GM12878 (cell line): ENCODE measurements at regions of chr1 and their contacts with region 1.

Region 1: GRCh38 chr1:199173356-199173755 is 534.5 kb downstream of the PTPRC start:
- DNase-seq: peak; percentile 92
- ATAC-seq: peak; percentile 89
- H3K4me3 ChIP-seq: no peak overlapping the region
- H3K27ac ChIP-seq: peak overlapping the region; percentile 85
- H3K4me1 ChIP-seq: peaks cover 27% of the 10 kb centered on the region
- H3K27me3 ChIP-seq: no peaks in the 10 kb centered on the region
- CTCF ChIP-seq: no peak
- EP300 ChIP-seq: peak; percentile 94 to 95
- POLR2A ChIP-seq: no peak
- RAD21 ChIP-seq: peak; percentile 20; the same call in 1 of the 2 replicates

Region 2: DNA sequence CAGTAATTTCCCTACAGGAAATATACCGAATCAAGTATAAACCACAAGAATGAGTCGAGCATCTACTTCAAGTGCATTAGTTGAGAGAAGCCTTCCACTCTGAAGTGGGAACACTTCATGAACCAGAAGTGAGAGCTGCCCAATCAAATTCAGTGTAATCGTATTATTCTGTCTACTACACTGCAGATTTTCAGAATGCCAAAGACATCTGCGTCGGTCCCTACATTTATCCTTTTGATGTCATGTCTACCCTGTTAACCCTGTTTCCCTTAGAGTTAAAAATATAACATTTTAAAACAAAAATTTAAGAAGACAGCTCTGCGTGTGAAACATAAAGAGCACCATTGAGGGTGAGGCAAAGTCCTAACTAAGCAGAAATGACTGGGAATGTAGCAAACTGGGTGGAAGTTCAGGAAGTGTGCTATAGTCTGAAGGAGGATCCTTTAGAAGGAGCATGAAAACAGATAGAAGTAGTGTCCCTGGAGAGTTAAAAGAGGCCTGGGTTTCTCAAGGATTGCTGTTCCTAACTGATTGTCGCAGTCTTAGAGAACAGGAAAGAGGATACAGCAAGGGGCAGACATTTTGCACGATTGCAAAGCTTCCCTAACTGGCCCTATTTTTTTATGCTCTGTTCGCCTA is 243.3 kb before region 1 on chr1:
- CTCF ChIA-PET with region 1: interaction called, 8 read pairs
- POLR2A ChIA-PET with region 1: interaction called, 3 read pairs
- RAD21 ChIA-PET with region 1: interaction called, 33 read pairs
- SMC1A ChIA-PET with region 1: interaction called, 34 read pairs
- in situ Hi-C with region 1: loop called (anchors 5 kb)
- intact Hi-C with region 1: loop called (anchors 5 kb)
- DNase-seq: peak; percentile 45
- ATAC-seq: peak; percentile 69
- H3K4me3 ChIP-seq: peak overlapping the region; percentile 59
- H3K27ac ChIP-seq: peak overlapping the region; percentile 76
- H3K4me1 ChIP-seq: peaks cover 2% of the 10 kb centered on the region; the same call in 1 of the 2 replicates
- H3K27me3 ChIP-seq: no peaks in the 10 kb centered on the region
- CTCF ChIP-seq: no peak
- EP300 ChIP-seq: no peak
- POLR2A ChIP-seq: no peak
- RAD21 ChIP-seq: no peak

Region 3: DNA sequence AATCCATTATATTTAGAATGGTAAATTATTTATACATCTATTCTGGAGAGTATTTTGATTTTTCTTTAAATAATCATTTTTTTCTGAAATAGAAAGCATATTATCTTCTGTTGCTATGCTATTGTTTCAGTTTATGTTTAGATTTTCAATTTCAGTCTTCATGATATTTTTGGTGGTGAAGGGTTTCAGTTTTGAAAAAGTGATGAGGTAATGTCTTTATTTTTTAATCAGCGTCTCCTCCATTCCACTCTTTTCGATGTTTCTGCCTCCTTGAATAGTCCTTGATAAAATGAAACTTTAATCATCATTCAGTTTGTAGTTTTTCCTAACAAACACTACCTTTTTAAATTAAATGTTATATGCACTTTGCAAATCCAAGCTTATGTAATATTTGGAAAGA is 105.9 kb before region 1 on chr1:
- CTCF ChIA-PET with region 1: interaction called, 3 read pairs
- POLR2A ChIA-PET with region 1: no interaction called
- RAD21 ChIA-PET with region 1: interaction called, 11 read pairs
- SMC1A ChIA-PET with region 1: interaction called, 7 read pairs
- in situ Hi-C with region 1: no loop called
- intact Hi-C with region 1: no loop called
- DNase-seq: no peak
- ATAC-seq: peak; percentile 90
- H3K4me3 ChIP-seq: 0 out of 2 replicates have a peak overlapping the region, but pooled peaks have one; percentile 11
- H3K27ac ChIP-seq: peak overlapping the region; percentile 61; the same call in 1 of the 2 replicates
- H3K4me1 ChIP-seq: peaks cover 7% of the 10 kb centered on the region; the same call in 1 of the 2 replicates
- H3K27me3 ChIP-seq: no peaks in the 10 kb centered on the region
- CTCF ChIP-seq: no peak
- EP300 ChIP-seq: peak in 1 of 2 experiments; percentile 60; a peak in 1 of 4 replicates
- POLR2A ChIP-seq: no peak
- RAD21 ChIP-seq: no peak

Region 4: GRCh38 chr1:199089393-199090122 is 83.8 kb before region 1 on chr1:
- CTCF ChIA-PET with region 1: no interaction called
- POLR2A ChIA-PET with region 1: no interaction called
- RAD21 ChIA-PET with region 1: interaction called, 22 read pairs
- SMC1A ChIA-PET with region 1: interaction called, 18 read pairs
- in situ Hi-C with region 1: no loop called
- intact Hi-C with region 1: loop called (anchors 5 kb)
- DNase-seq: peak; percentile 60
- ATAC-seq: peak; percentile 97
- H3K4me3 ChIP-seq: no peak overlapping the region
- H3K27ac ChIP-seq: peak overlapping the region; percentile 59
- H3K4me1 ChIP-seq: peaks cover 6% of the 10 kb centered on the region
- H3K27me3 ChIP-seq: no peaks in the 10 kb centered on the region
- CTCF ChIP-seq: no peak
- EP300 ChIP-seq: peak; percentile 40 to 76
- POLR2A ChIP-seq: no peak
- RAD21 ChIP-seq: no peak

Region 5: DNA sequence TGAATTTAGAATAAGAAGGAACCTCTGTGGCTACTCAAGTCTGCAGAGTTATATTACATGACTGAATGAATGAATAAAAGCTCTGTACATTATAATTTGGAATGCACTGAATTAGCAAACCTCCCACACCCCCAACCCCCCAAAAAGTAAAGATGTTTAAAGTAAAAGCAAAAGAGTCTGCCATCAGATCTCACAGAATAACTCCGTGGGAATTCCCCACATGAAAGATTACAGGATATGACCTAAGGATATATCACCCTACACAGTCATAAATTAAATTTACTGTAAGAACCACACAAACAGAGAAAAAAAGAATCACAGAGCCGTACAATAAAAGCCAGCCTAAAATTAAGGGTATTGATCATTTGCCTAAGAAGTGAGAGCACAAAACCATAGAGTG is 52.8 kb after region 1 on chr1:
- CTCF ChIA-PET with region 1: interaction called, 11 read pairs
- POLR2A ChIA-PET with region 1: interaction called, 3 read pairs
- RAD21 ChIA-PET with region 1: interaction called, 20 read pairs
- SMC1A ChIA-PET with region 1: interaction called, 17 read pairs
- in situ Hi-C with region 1: no loop called
- intact Hi-C with region 1: loop called (anchors 1 kb)
- DNase-seq: peak; percentile 16
- ATAC-seq: peak; percentile 94
- H3K4me3 ChIP-seq: no peak overlapping the region
- H3K27ac ChIP-seq: peak overlapping the region; percentile 52; the same call in 1 of the 2 replicates
- H3K4me1 ChIP-seq: peaks cover 3% of the 10 kb centered on the region; the same call in 1 of the 2 replicates
- H3K27me3 ChIP-seq: no peaks in the 10 kb centered on the region
- CTCF ChIP-seq: no peak
- EP300 ChIP-seq: peak in 1 of 2 experiments; percentile 15; a peak in 1 of 4 replicates
- POLR2A ChIP-seq: no peak
- RAD21 ChIP-seq: no peak